Transverse colon (tissue), 4 donors: ENCODE measurements at regions of chr6 and their contacts with region 1.

Region 1: DNA sequence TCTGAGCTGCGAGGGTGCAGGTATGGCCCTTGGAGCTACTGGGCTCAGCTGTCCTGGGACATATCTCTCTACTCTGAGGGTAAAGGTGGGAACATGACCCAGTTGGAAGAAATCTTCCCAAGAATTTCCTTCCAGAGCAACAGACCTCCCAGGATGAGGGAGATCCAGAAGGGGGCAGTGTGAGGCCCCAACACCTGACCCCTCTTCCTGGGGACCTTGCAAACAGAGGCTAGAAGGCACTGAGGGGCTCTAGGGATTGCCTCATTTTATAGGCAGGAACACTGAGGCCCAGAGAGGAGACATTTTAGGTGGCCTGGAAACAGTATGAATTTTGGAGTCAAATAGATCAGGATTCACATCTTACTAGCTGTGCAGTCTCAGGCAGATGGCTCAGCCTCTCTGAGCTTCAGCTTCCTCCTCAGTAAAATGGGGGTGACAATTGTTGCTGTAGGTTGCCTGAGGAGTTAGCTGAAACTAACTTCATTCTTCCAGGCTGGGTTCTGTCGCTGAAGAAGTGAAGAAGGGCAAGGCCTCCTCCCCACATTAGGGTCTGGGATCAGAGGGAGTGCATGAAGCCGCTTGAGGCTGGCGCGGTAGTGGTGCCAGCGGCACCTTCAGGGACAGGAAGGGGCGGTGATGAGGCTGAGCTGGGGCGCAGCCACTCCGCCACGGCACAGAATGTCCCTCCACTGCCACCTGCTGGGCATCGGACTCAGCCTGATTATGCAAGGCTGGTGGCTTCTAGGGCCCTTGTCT is 11.4 kb downstream of the KCNK17 start:
- DNase-seq: peak; percentile 91
- H3K4me3 ChIP-seq: no peak overlapping the region
- H3K27ac ChIP-seq: no peak overlapping the region
- H3K4me1 ChIP-seq: peaks cover 0 to 6% (median 3%) of the 10 kb centered on the region in 4 donors
- H3K27me3 ChIP-seq: no peaks in the 10 kb centered on the region
- CTCF ChIP-seq: peak; percentile 84 to 97 (median 92)
- EP300 ChIP-seq: no peak
- POLR2A ChIP-seq: no peak

Region 2: DNA sequence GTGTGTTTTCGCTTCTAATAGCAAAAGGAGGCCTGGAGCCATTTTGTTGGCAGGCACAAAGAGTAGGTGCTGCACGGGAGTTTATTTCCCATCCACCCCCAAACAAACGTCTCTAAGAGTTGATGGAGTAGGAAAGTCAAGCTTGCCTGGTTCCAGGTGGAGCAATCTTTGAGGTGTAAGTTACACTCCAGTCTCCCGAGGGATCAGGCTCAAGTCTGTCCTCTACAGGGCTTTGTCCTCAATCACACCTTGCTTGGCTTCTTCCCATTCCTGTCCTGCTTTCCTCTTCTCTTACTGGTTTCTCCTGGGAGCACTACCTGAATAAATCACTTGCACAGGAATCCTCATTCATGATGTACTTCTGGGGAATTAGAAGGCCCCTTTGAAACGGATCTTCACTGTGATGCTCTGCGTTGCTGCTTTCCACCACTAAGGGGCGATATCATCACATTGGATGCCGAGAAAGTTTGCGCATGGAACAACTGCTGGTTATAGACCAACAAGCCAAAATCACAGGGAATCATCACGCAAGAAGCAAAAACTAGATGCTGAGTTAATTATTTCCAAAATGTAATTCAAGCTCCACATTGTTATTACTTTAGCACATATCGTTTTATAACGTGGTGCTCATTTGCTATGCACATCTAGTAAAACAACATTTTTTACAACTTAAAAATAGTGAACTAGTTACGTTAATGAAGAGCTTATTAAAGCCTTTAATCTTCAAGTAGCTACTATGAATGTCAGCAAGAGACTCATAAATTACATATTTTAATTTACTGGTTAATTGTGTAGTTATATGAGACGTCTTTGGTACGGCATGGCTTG is 430.9 kb before region 1 on chr6:
- in situ Hi-C with region 1: loop called (anchors 5 to 25 kb)
- intact Hi-C with region 1: no loop called
- DNase-seq: peak; percentile 47
- H3K4me3 ChIP-seq: no peak overlapping the region
- H3K27ac ChIP-seq: no peak overlapping the region
- H3K4me1 ChIP-seq: no peaks in the 10 kb centered on the region
- H3K27me3 ChIP-seq: peaks cover 11% of the 10 kb centered on the region
- CTCF ChIP-seq: peak; percentile 73 to 84 (median 77)
- EP300 ChIP-seq: no peak
- POLR2A ChIP-seq: no peak

Region 3: DNA sequence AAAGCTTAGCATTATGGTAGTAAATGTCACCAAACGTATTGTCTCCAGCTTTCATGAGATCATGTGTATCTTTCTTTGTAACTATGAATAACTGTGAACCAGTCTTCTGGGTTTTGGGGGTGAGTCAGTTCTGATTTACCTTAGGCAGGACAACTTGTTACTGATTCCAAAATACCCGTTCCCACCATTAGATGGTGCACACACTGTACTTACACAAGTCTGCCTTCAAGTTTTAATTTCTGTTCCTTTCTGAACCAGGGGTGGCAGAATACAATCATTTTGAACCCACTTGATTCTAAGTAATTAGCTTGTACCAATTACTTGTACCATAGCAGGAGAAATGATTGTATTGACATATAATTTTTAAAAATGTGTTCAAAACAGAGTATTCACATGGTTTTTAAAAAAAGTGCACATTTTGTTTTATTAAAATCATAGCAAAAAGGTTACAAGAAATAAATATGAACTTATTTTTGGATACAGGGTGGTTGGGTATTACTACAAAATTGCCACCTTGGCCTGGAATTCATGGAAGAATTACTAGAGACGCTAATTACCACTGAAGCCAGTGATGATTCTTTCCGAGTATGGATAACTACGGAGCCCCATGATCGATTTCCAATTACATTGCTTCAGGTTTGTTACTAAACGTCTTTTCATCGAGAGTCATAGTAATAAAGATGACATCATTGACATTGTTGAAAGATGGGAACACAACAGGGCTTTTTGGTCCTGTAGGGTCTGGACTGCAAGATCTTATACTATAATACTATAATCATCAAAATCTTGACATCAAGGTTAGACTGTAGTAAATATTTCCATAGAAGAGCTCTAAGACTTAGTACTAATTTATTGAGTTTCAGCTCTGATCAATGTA is 329.4 kb before region 1 on chr6:
- in situ Hi-C with region 1: loop called (anchors 25 kb)
- intact Hi-C with region 1: loop called (anchors 5 kb)
- DNase-seq: no peak
- H3K4me3 ChIP-seq: no peak overlapping the region
- H3K27ac ChIP-seq: no peak overlapping the region
- H3K4me1 ChIP-seq: peaks cover 0 to 6% (median 0%) of the 10 kb centered on the region in 4 donors
- H3K27me3 ChIP-seq: peaks cover 28% of the 10 kb centered on the region
- CTCF ChIP-seq: peak; percentile 43 to 67 (median 51)
- EP300 ChIP-seq: no peak
- POLR2A ChIP-seq: no peak

Region 4: GRCh38 chr6:38997128-38997761 is 305.6 kb before region 1 on chr6:
- in situ Hi-C with region 1: loop called in 3 of 4 experiments (anchors 25 kb)
- intact Hi-C with region 1: no loop called
- DNase-seq: no peak
- H3K4me3 ChIP-seq: no peak overlapping the region
- H3K27ac ChIP-seq: no peak overlapping the region
- H3K4me1 ChIP-seq: no peaks in the 10 kb centered on the region
- H3K27me3 ChIP-seq: peaks cover 18% of the 10 kb centered on the region
- CTCF ChIP-seq: peak in 4 of 5 experiments; percentile 23 to 34 (median 28)
- EP300 ChIP-seq: no peak
- POLR2A ChIP-seq: no peak

Region 5: DNA sequence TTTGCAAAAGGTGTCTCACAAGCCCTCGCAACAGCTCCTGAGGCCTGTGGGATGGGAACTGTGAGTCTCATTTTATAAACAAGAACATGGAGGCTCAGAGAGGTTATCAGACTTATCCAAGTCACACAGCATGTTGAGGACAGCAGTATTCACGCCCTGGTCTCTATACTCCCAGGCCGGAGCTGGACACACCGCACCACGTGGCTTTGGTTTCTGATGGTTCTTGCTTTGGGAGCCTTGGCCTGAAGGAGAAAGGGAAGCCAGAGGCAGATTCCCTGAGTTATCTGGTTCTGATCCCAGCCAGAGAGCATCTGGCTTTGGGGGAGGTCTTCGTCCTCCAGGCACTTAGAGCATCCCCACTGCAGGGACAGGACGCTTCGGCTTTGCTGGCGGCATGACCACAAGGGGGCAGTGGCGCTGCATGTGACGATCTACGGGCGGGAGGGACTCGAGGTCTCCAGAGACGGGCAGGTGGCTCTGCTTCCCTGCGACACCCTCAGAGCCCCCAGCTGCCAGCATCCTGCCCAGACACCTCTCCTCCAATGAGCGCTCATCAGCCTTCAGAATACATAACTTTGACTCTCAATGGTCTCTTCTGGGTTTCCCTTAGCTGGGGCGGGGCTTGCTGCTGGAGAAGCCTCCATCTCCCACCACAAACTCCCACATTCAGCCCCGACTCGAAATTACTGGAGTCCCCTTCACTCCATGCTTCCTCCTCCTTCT is 136.5 kb before region 1 on chr6:
- in situ Hi-C with region 1: loop called (anchors 5 kb)
- intact Hi-C with region 1: loop called (anchors 2 kb)
- DNase-seq: peak; percentile 84
- H3K4me3 ChIP-seq: no peak overlapping the region
- H3K27ac ChIP-seq: no peak overlapping the region
- H3K4me1 ChIP-seq: peaks cover 0 to 30% (median 20%) of the 10 kb centered on the region in 4 donors
- H3K27me3 ChIP-seq: peaks cover 3% of the 10 kb centered on the region
- CTCF ChIP-seq: peak; percentile 82 to 94 (median 86)
- EP300 ChIP-seq: no peak
- POLR2A ChIP-seq: no peak

Region 6: GRCh38 chr6:39254999-39255535 is 47.8 kb before region 1 on chr6:
- in situ Hi-C with region 1: no loop called
- intact Hi-C with region 1: loop called (anchors 1 kb)
- DNase-seq: no peak
- H3K4me3 ChIP-seq: no peak overlapping the region
- H3K27ac ChIP-seq: no peak overlapping the region
- H3K4me1 ChIP-seq: peaks cover 0 to 3% (median 0%) of the 10 kb centered on the region in 4 donors
- H3K27me3 ChIP-seq: no peaks in the 10 kb centered on the region
- CTCF ChIP-seq: no peak
- EP300 ChIP-seq: no peak
- POLR2A ChIP-seq: no peak